ENCODE measurements at regions of chr10 and their contacts with region 1.

Region 1: GRCh38 chr10:89793649-89794254 is 92.4 kb downstream of the KIF20B start:
- DNase-seq: peak; percentile 25 to 49
- H3K4me3 ChIP-seq: no peak overlapping the region
- H3K27ac ChIP-seq: no peak overlapping the region
- H3K4me1 ChIP-seq: no peaks in the 10 kb centered on the region
- H3K27me3 ChIP-seq: no peaks in the 10 kb centered on the region
- CTCF ChIP-seq: peak; percentile 86

Region 2: GRCh38 chr10:89921422-89921821 is 127.7 kb after region 1 on chr10:
- CTCF ChIA-PET with region 1: no interaction called
- POLR2A ChIA-PET with region 1: no interaction called
- intact Hi-C with region 1: loop called (anchors 2 kb)
- DNase-seq: peak; percentile 64 to 99
- H3K4me3 ChIP-seq: no peak overlapping the region
- H3K27ac ChIP-seq: peak overlapping the region; percentile 71
- H3K4me1 ChIP-seq: peaks cover 61% of the 10 kb centered on the region
- H3K27me3 ChIP-seq: no peaks in the 10 kb centered on the region
- CTCF ChIP-seq: no peak

Region 3: GRCh38 chr10:90306187-90306586 is 512.4 kb after region 1 on chr10:
- CTCF ChIA-PET with region 1: no interaction called
- POLR2A ChIA-PET with region 1: no interaction called
- intact Hi-C with region 1: loop called (anchors 5 kb)
- DNase-seq: no peak
- H3K4me3 ChIP-seq: no peak overlapping the region
- H3K27ac ChIP-seq: no peak overlapping the region
- H3K4me1 ChIP-seq: no peaks in the 10 kb centered on the region
- H3K27me3 ChIP-seq: no peaks in the 10 kb centered on the region
- CTCF ChIP-seq: no peak

Region 4: GRCh38 chr10:90652519-90652918 is 858.8 kb after region 1 on chr10:
- CTCF ChIA-PET with region 1: no interaction called
- POLR2A ChIA-PET with region 1: no interaction called
- intact Hi-C with region 1: loop called (anchors 2 kb)
- DNase-seq: peak in 1 of 2 experiments; percentile 10
- H3K4me3 ChIP-seq: no peak overlapping the region
- H3K27ac ChIP-seq: no peak overlapping the region
- H3K4me1 ChIP-seq: no peaks in the 10 kb centered on the region
- H3K27me3 ChIP-seq: no peaks in the 10 kb centered on the region
- CTCF ChIP-seq: peak; percentile 44; the same call in 1 of the 2 replicates

Region 5: GRCh38 chr10:90787393-90788198 is 993.8 kb after region 1 on chr10:
- CTCF ChIA-PET with region 1: no interaction called
- POLR2A ChIA-PET with region 1: no interaction called
- intact Hi-C with region 1: loop called (anchors 5 kb)
- DNase-seq: peak in 1 of 2 experiments; percentile 24
- H3K4me3 ChIP-seq: no peak overlapping the region
- H3K27ac ChIP-seq: no peak overlapping the region
- H3K4me1 ChIP-seq: no peaks in the 10 kb centered on the region
- H3K27me3 ChIP-seq: no peaks in the 10 kb centered on the region
- CTCF ChIP-seq: peak; percentile 68